GM12878 (cell line): ENCODE measurements at regions of chr4 and their contacts with region 1.

Region 1: GRCh38 chr4:8176547-8177399 is 18.2 kb upstream of the ABLIM2 start:
- DNase-seq: no peak
- ATAC-seq: peak; percentile 91
- H3K4me3 ChIP-seq: no peak overlapping the region
- H3K27ac ChIP-seq: no peak overlapping the region
- H3K4me1 ChIP-seq: peaks cover 18% of the 10 kb centered on the region
- H3K27me3 ChIP-seq: no peaks in the 10 kb centered on the region
- CTCF ChIP-seq: peak; percentile 93 to 96 (median 94)
- EP300 ChIP-seq: no peak
- POLR2A ChIP-seq: no peak
- RAD21 ChIP-seq: peak; percentile 93

Region 2: DNA sequence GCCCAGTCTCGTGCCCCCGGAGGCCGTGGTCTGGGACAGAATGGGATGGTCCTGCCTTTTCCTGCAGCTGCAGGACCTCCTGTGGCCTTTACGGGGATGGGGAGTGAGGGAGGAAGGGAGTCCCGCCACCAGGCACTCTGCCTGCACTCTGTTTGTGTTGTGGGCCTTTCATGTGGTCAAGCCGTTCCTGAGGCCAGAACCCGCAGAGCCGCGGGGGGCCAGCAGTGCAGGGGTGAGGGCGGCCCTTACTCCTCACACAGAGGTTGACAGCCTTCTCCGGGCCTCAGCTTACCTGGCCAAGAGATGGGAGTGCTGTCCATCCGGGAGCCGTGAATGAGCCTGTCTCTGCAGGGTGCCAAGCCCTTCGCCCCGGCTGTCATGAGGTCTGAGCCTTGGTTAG is 467.8 kb before region 1 on chr4:
- CTCF ChIA-PET with region 1: no interaction called
- POLR2A ChIA-PET with region 1: no interaction called
- RAD21 ChIA-PET with region 1: no interaction called
- SMC1A ChIA-PET with region 1: no interaction called
- in situ Hi-C with region 1: no loop called
- intact Hi-C with region 1: no loop called
- DNase-seq: no peak
- ATAC-seq: no peak
- H3K4me3 ChIP-seq: no peak overlapping the region
- H3K27ac ChIP-seq: no peak overlapping the region
- H3K4me1 ChIP-seq: no peaks in the 10 kb centered on the region
- H3K27me3 ChIP-seq: no peaks in the 10 kb centered on the region; a peak in 2 of 4 replicates
- CTCF ChIP-seq: no peak
- EP300 ChIP-seq: no peak
- POLR2A ChIP-seq: no peak
- RAD21 ChIP-seq: no peak

Region 3: GRCh38 chr4:7802093-7802726 is 374.6 kb before region 1 on chr4:
- CTCF ChIA-PET with region 1: no interaction called
- POLR2A ChIA-PET with region 1: no interaction called
- RAD21 ChIA-PET with region 1: no interaction called
- SMC1A ChIA-PET with region 1: no interaction called
- in situ Hi-C with region 1: no loop called
- intact Hi-C with region 1: loop called (anchors 5 kb)
- DNase-seq: no peak
- ATAC-seq: peak; percentile 96
- H3K4me3 ChIP-seq: no peak overlapping the region
- H3K27ac ChIP-seq: no peak overlapping the region
- H3K4me1 ChIP-seq: no peaks in the 10 kb centered on the region
- H3K27me3 ChIP-seq: 0 out of 4 replicates have a peak, but pooled peaks cover 0 to 3% of the 10 kb centered on the region in 2 experiments
- CTCF ChIP-seq: peak; percentile 91 to 95 (median 91)
- EP300 ChIP-seq: no peak
- POLR2A ChIP-seq: no peak
- RAD21 ChIP-seq: peak; percentile 98

Region 4: GRCh38 chr4:8198906-8199593 is 22.3 kb after region 1 on chr4 and contains the start of gene SH3TC1:
- CTCF ChIA-PET with region 1: interaction called, 96 read pairs
- POLR2A ChIA-PET with region 1: interaction called, 7 read pairs
- RAD21 ChIA-PET with region 1: interaction called, 76 read pairs
- SMC1A ChIA-PET with region 1: interaction called, 37 read pairs
- in situ Hi-C with region 1: no loop called
- intact Hi-C with region 1: no loop called
- DNase-seq: peak; percentile 68
- ATAC-seq: peak; percentile 80
- H3K4me3 ChIP-seq: peak within 1 kb of the TSS; percentile 74
- H3K27ac ChIP-seq: peak within 1 kb of the TSS; percentile 94
- H3K4me1 ChIP-seq: peaks cover 44% of the 10 kb centered on the region
- H3K27me3 ChIP-seq: no peaks in the 10 kb centered on the region
- CTCF ChIP-seq: 0 out of 6 replicates have a peak, but pooled peaks of 1 of the 3 experiments have one; percentile 4
- EP300 ChIP-seq: peak; percentile 60 to 68; a peak in 3 of 4 replicates
- POLR2A ChIP-seq: no peak
- RAD21 ChIP-seq: no peak
- polyA plus RNA-seq, gene SH3TC1: 0.19 to 0.62 TPM

Region 5: GRCh38 chr4:8228319-8229250 is 51.8 kb after region 1 on chr4:
- CTCF ChIA-PET with region 1: interaction called, 13 read pairs
- POLR2A ChIA-PET with region 1: no interaction called
- RAD21 ChIA-PET with region 1: interaction called, 9 read pairs
- SMC1A ChIA-PET with region 1: interaction called, 7 read pairs
- in situ Hi-C with region 1: no loop called
- intact Hi-C with region 1: no loop called
- DNase-seq: peak; percentile 76
- ATAC-seq: peak; percentile 88
- H3K4me3 ChIP-seq: no peak overlapping the region
- H3K27ac ChIP-seq: peak overlapping the region; percentile 83
- H3K4me1 ChIP-seq: peaks cover 29% of the 10 kb centered on the region
- H3K27me3 ChIP-seq: no peaks in the 10 kb centered on the region
- CTCF ChIP-seq: peak in 1 of 3 experiments; percentile 21; a peak in 1 of 6 replicates
- EP300 ChIP-seq: peak; percentile 62 to 78; a peak in 3 of 4 replicates
- POLR2A ChIP-seq: peak; percentile 45
- RAD21 ChIP-seq: no peak

Region 6: GRCh38 chr4:8250227-8250626 is 73.5 kb after region 1 on chr4:
- CTCF ChIA-PET with region 1: interaction called, 6 read pairs
- POLR2A ChIA-PET with region 1: no interaction called
- RAD21 ChIA-PET with region 1: no interaction called
- SMC1A ChIA-PET with region 1: interaction called, 10 read pairs
- in situ Hi-C with region 1: no loop called
- intact Hi-C with region 1: no loop called
- DNase-seq: no peak
- ATAC-seq: no peak
- H3K4me3 ChIP-seq: no peak overlapping the region
- H3K27ac ChIP-seq: no peak overlapping the region
- H3K4me1 ChIP-seq: no peaks in the 10 kb centered on the region
- H3K27me3 ChIP-seq: no peaks in the 10 kb centered on the region; a peak in 1 of 4 replicates
- CTCF ChIP-seq: no peak
- EP300 ChIP-seq: no peak
- POLR2A ChIP-seq: no peak
- RAD21 ChIP-seq: no peak

Region 7: GRCh38 chr4:8384397-8385060 is 207.8 kb after region 1 on chr4:
- CTCF ChIA-PET with region 1: no interaction called
- POLR2A ChIA-PET with region 1: no interaction called
- RAD21 ChIA-PET with region 1: no interaction called
- SMC1A ChIA-PET with region 1: no interaction called
- in situ Hi-C with region 1: no loop called
- intact Hi-C with region 1: no loop called
- DNase-seq: no peak
- ATAC-seq: no peak
- H3K4me3 ChIP-seq: no peak overlapping the region
- H3K27ac ChIP-seq: no peak overlapping the region
- H3K4me1 ChIP-seq: peaks cover 5% of the 10 kb centered on the region; the same call in 1 of the 2 replicates
- H3K27me3 ChIP-seq: no peaks in the 10 kb centered on the region
- CTCF ChIP-seq: no peak
- EP300 ChIP-seq: no peak
- POLR2A ChIP-seq: no peak
- RAD21 ChIP-seq: no peak

Region 8: DNA sequence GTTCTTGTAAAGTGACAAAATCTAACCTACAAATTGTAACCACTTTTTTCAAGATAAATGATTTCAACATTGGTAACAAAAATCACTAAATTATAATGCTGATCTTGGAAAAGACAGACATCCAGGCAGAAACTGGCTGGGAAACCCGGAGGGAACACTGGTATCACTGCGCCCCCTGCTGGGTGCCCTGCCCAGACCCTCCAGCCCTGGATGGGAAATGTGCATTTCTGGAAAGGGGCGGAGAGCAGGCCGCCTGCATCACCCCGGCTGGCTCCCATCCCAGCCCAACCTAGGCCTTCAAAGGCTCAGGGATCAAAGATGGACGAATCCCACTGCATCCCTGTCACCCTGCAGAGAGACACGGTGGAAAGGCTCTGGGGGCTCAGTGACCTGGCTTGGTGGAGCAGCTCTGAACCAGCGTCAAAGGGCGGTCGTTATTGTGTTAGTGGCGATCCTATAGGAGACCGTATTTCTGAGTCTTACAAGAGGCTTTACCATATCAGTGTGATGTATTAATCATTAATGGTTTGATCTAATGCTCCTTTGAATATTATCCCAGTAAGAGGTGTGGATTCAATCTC is 226.5 kb after region 1 on chr4:
- CTCF ChIA-PET with region 1: interaction called, 22 read pairs
- POLR2A ChIA-PET with region 1: no interaction called
- RAD21 ChIA-PET with region 1: interaction called, 11 read pairs
- SMC1A ChIA-PET with region 1: interaction called, 22 read pairs
- in situ Hi-C with region 1: no loop called
- intact Hi-C with region 1: no loop called
- DNase-seq: no peak
- ATAC-seq: peak; percentile 91
- H3K4me3 ChIP-seq: no peak overlapping the region
- H3K27ac ChIP-seq: no peak overlapping the region
- H3K4me1 ChIP-seq: no peaks in the 10 kb centered on the region
- H3K27me3 ChIP-seq: no peaks in the 10 kb centered on the region
- CTCF ChIP-seq: peak; percentile 81 to 91 (median 83)
- EP300 ChIP-seq: no peak
- POLR2A ChIP-seq: no peak
- RAD21 ChIP-seq: peak; percentile 66